CD8-positive, alpha-beta T cell (primary cell): ENCODE measurements at regions of chr9 and their contacts with region 1.

Region 1: GRCh38 chr9:34349324-34349723 is 20.0 kb downstream of the NUDT2 start:
- DNase-seq: no peak
- ATAC-seq: no peak
- H3K4me3 ChIP-seq: no peak overlapping the region
- H3K4me3 Mint-ChIP-seq: no peak overlapping the region
- H3K27ac ChIP-seq: no peak overlapping the region
- H3K27ac Mint-ChIP-seq: no peak overlapping the region
- H3K4me1 ChIP-seq: no peaks in the 10 kb centered on the region
- H3K4me1 Mint-ChIP-seq: no peaks in the 10 kb centered on the region
- H3K27me3 ChIP-seq: no peaks in the 10 kb centered on the region
- H3K27me3 Mint-ChIP-seq: no peaks in the 10 kb centered on the region
- CTCF ChIP-seq: no peak

Region 2: GRCh38 chr9:33092634-33093033 is 1256.7 kb before region 1 on chr9:
- CTCF ChIA-PET with region 1: no interaction called
- POLR2A ChIA-PET with region 1: no interaction called
- intact Hi-C with region 1: no loop called
- DNase-seq: no peak
- ATAC-seq: no peak
- H3K4me3 ChIP-seq: no peak overlapping the region
- H3K4me3 Mint-ChIP-seq: no peak overlapping the region
- H3K27ac ChIP-seq: no peak overlapping the region
- H3K27ac Mint-ChIP-seq: no peak overlapping the region
- H3K4me1 ChIP-seq: no peaks in the 10 kb centered on the region
- H3K4me1 Mint-ChIP-seq: peaks cover 9% of the 10 kb centered on the region
- H3K27me3 ChIP-seq: no peaks in the 10 kb centered on the region
- H3K27me3 Mint-ChIP-seq: no peaks in the 10 kb centered on the region
- CTCF ChIP-seq: no peak

Region 3: DNA sequence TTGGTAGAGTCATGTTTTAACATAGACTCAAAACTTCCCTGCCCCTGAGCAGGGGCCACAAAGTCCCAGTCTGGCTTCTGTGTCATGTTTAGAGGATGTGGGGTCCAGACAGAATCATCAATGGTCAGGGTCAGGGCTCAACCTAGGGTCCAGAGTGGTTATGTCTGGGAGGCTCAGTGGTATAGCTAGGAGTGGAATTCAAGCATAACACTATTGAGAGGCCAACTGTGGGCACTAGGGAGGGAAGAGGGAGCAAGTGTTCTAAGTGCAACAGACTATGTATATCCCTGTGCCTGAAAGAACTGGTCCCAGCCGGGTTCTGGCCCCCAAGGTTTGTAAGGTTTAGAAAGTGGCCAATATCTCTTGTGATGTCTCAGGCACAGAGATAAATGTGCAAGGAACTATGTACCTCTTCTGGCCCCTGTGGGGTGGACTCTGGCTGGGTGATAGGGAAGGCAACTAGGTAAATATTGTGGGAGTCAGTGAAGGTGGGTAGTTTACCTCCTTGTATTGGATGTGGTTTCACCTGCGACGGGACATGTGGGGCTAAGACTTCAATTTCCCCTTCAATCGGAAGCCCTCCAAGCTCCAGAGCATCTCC is 13.4 kb after region 1 on chr9:
- CTCF ChIA-PET with region 1: no interaction called
- POLR2A ChIA-PET with region 1: no interaction called
- intact Hi-C with region 1: no loop called
- DNase-seq: no peak
- ATAC-seq: no peak
- H3K4me3 ChIP-seq: no peak overlapping the region
- H3K4me3 Mint-ChIP-seq: no peak overlapping the region
- H3K27ac ChIP-seq: no peak overlapping the region
- H3K27ac Mint-ChIP-seq: no peak overlapping the region
- H3K4me1 ChIP-seq: peaks cover 15% of the 10 kb centered on the region
- H3K4me1 Mint-ChIP-seq: peaks cover 13% of the 10 kb centered on the region
- H3K27me3 ChIP-seq: no peaks in the 10 kb centered on the region
- H3K27me3 Mint-ChIP-seq: no peaks in the 10 kb centered on the region
- CTCF ChIP-seq: no peak

Region 4: GRCh38 chr9:34386656-34387055 is 37.3 kb after region 1 on chr9:
- CTCF ChIA-PET with region 1: no interaction called
- POLR2A ChIA-PET with region 1: no interaction called
- intact Hi-C with region 1: loop called in 1 of 2 experiments (anchors 1 kb)
- DNase-seq: peak in 1 of 9 experiments; percentile 41
- ATAC-seq: no peak
- H3K4me3 ChIP-seq: no peak overlapping the region
- H3K4me3 Mint-ChIP-seq: no peak overlapping the region
- H3K27ac ChIP-seq: no peak overlapping the region
- H3K27ac Mint-ChIP-seq: no peak overlapping the region
- H3K4me1 ChIP-seq: no peaks in the 10 kb centered on the region
- H3K4me1 Mint-ChIP-seq: peaks cover 2% of the 10 kb centered on the region
- H3K27me3 ChIP-seq: no peaks in the 10 kb centered on the region
- H3K27me3 Mint-ChIP-seq: no peaks in the 10 kb centered on the region
- CTCF ChIP-seq: no peak

Region 5: GRCh38 chr9:34759432-34760134 is 410.3 kb after region 1 on chr9:
- CTCF ChIA-PET with region 1: no interaction called
- POLR2A ChIA-PET with region 1: no interaction called
- intact Hi-C with region 1: no loop called
- DNase-seq: no peak
- ATAC-seq: no peak
- H3K4me3 ChIP-seq: no peak overlapping the region
- H3K4me3 Mint-ChIP-seq: no peak overlapping the region
- H3K27ac ChIP-seq: no peak overlapping the region
- H3K27ac Mint-ChIP-seq: no peak overlapping the region
- H3K4me1 ChIP-seq: no peaks in the 10 kb centered on the region
- H3K4me1 Mint-ChIP-seq: peaks cover 3% of the 10 kb centered on the region
- H3K27me3 ChIP-seq: peaks cover 0 to 3% of the 10 kb centered on the region in 2 experiments
- H3K27me3 Mint-ChIP-seq: peaks cover 34% of the 10 kb centered on the region
- CTCF ChIP-seq: no peak